Psoas muscle (tissue), 8 donors: ENCODE measurements at regions of chr17 and their contacts with region 1.

Region 1: GRCh38 chr17:4833178-4833940 is at the start of gene MINK1:
- DNase-seq: peak; percentile 91 to 95
- ATAC-seq: peak; percentile 98 to 99 (median 98)
- H3K4me3 ChIP-seq: peak within 1 kb of the TSS; percentile 98
- H3K27ac ChIP-seq: peak within 1 kb of the TSS; percentile 94
- H3K4me1 ChIP-seq: peaks cover 25% of the 10 kb centered on the region
- H3K27me3 ChIP-seq: no peaks in the 10 kb centered on the region
- CTCF ChIP-seq: no peak
- total RNA-seq, gene MINK1: 15.8 to 23.8 (median 20.8) TPM

Region 2: GRCh38 chr17:4691686-4692085 is 141.7 kb before region 1 on chr17:
- intact Hi-C with region 1: no loop called
- DNase-seq: no peak
- ATAC-seq: no peak
- H3K4me3 ChIP-seq: no peak overlapping the region
- H3K27ac ChIP-seq: no peak overlapping the region
- H3K4me1 ChIP-seq: no peaks in the 10 kb centered on the region
- H3K27me3 ChIP-seq: no peaks in the 10 kb centered on the region
- CTCF ChIP-seq: no peak

Region 3: DNA sequence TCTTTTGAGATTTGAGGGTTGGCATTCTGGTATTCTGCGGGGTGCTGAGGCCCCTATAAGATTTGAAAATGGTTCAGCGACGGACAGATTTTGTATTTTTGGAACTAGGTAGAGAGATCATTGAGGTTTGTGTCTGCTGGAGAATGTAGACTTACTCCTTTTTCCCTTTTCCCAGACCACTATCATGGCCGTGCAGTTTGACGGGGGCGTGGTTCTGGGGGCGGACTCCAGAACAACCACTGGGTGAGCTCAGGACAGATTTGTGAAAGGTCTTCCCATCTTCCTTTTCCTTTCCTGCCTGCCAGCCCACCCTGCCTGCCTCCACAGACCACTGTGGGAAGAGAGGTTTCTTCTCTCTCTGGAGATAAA is 36.8 kb before region 1 on chr17:
- intact Hi-C with region 1: loop called in 1 of 2 experiments (anchors 5 kb)
- DNase-seq: peak in 1 of 2 donors; percentile 37
- ATAC-seq: peak in 3 of 4 donors; percentile 59 to 76 (median 63)
- H3K4me3 ChIP-seq: peak overlapping the region; percentile 84
- H3K27ac ChIP-seq: peak overlapping the region; percentile 79
- H3K4me1 ChIP-seq: peaks cover 7% of the 10 kb centered on the region
- H3K27me3 ChIP-seq: no peaks in the 10 kb centered on the region
- CTCF ChIP-seq: no peak

Region 4: GRCh38 chr17:4881761-4882555 is 48.6 kb after region 1 on chr17:
- intact Hi-C with region 1: loop called (anchors 10 kb)
- DNase-seq: peak; percentile 43 to 70
- ATAC-seq: peak; percentile 58 to 83 (median 70)
- H3K4me3 ChIP-seq: no peak overlapping the region
- H3K27ac ChIP-seq: no peak overlapping the region
- H3K4me1 ChIP-seq: no peaks in the 10 kb centered on the region
- H3K27me3 ChIP-seq: no peaks in the 10 kb centered on the region
- CTCF ChIP-seq: peak; percentile 67

Region 5: GRCh38 chr17:4948931-4949320 is 115.6 kb after region 1 on chr17:
- intact Hi-C with region 1: no loop called
- DNase-seq: peak; percentile 89 to 92
- ATAC-seq: peak; percentile 65 to 71 (median 70)
- H3K4me3 ChIP-seq: peak overlapping the region; percentile 97
- H3K27ac ChIP-seq: peak overlapping the region; percentile 96
- H3K4me1 ChIP-seq: peaks cover 41% of the 10 kb centered on the region
- H3K27me3 ChIP-seq: no peaks in the 10 kb centered on the region
- CTCF ChIP-seq: no peak